PC-3 (cell line): ENCODE measurements at regions of chr12 and their contacts with region 1.

Region 1: DNA sequence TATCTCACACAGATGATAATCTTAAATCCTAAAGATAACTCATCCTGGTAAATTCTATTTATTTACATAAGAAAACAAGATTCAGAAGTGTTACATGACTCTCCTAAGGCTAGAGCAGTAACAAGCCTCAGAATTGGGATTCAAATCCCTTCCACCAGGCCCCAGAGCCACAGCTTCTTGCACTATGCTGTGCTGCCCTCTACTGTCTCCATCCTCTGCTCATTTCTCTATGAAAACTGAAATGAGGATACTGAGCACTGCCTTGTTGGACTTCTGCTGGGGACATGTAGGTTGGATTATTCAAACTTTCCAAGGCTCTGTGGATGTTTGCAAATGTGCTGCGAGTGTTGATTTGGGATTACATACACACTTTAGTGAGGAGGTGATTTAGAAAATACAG is 23.5 kb upstream of the C12orf50 start:
- DNase-seq: peak; percentile 67
- ATAC-seq: peak; percentile 94
- H3K4me3 ChIP-seq: no peak overlapping the region
- H3K27ac ChIP-seq: no peak overlapping the region
- H3K4me1 ChIP-seq: no peaks in the 10 kb centered on the region
- H3K27me3 ChIP-seq: no peaks in the 10 kb centered on the region
- CTCF ChIP-seq: peak; percentile 79

Region 2: GRCh38 chr12:88035907-88036289 is 16.8 kb before region 1 on chr12:
- CTCF ChIA-PET with region 1: no interaction called
- POLR2A ChIA-PET with region 1: no interaction called
- intact Hi-C with region 1: loop called (anchors 2 kb)
- DNase-seq: peak; percentile 21
- ATAC-seq: peak; percentile 17
- H3K4me3 ChIP-seq: peak overlapping the region; percentile 80
- H3K27ac ChIP-seq: no peak overlapping the region
- H3K4me1 ChIP-seq: peaks cover 20% of the 10 kb centered on the region
- H3K27me3 ChIP-seq: no peaks in the 10 kb centered on the region
- CTCF ChIP-seq: no peak